Naive thymus-derived CD8-positive, alpha-beta T cell (primary cell): ENCODE measurements at regions of chr1 and their contacts with region 1.

Region 1: GRCh38 chr1:181159451-181160140 is 71.1 kb downstream of the IER5 start:
- DNase-seq: peak in 8 of 10 donors; percentile 40 to 80 (median 65)
- ATAC-seq: peak; percentile 85 to 86
- H3K4me3 Mint-ChIP-seq: peak overlapping the region; percentile 26 to 82 (median 56)
- H3K27ac Mint-ChIP-seq: peak overlapping the region; percentile 57 to 93 (median 86)
- H3K4me1 Mint-ChIP-seq: peaks cover 19 to 45% (median 41%) of the 10 kb centered on the region in 4 donors
- H3K27me3 Mint-ChIP-seq: no peaks in the 10 kb centered on the region

Region 2: DNA sequence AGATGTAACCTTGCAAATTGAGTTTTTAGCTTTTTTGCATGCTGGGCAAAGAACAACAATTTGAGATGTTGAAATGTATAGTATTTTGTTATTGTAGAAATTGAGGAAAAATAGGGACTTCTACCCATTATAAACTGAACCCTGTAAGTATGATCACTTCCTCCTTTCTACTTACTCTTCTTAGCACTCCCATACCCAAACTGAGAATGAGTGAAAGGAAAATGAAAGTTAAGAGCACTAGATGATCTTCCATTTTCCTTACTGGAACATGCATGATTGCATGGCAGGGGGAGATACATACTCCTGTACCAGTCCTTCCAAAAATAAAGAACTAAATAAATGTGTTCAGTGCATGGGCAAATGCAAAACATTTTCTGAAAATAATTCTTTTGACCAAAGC is 354.3 kb before region 1 on chr1:
- POLR2A ChIA-PET with region 1: no interaction called
- DNase-seq: no peak
- ATAC-seq: no peak
- H3K4me3 Mint-ChIP-seq: no peak overlapping the region
- H3K27ac Mint-ChIP-seq: no peak overlapping the region
- H3K4me1 Mint-ChIP-seq: peaks cover 0 to 9% (median 5%) of the 10 kb centered on the region in 4 donors
- H3K27me3 Mint-ChIP-seq: no peaks in the 10 kb centered on the region

Region 3: DNA sequence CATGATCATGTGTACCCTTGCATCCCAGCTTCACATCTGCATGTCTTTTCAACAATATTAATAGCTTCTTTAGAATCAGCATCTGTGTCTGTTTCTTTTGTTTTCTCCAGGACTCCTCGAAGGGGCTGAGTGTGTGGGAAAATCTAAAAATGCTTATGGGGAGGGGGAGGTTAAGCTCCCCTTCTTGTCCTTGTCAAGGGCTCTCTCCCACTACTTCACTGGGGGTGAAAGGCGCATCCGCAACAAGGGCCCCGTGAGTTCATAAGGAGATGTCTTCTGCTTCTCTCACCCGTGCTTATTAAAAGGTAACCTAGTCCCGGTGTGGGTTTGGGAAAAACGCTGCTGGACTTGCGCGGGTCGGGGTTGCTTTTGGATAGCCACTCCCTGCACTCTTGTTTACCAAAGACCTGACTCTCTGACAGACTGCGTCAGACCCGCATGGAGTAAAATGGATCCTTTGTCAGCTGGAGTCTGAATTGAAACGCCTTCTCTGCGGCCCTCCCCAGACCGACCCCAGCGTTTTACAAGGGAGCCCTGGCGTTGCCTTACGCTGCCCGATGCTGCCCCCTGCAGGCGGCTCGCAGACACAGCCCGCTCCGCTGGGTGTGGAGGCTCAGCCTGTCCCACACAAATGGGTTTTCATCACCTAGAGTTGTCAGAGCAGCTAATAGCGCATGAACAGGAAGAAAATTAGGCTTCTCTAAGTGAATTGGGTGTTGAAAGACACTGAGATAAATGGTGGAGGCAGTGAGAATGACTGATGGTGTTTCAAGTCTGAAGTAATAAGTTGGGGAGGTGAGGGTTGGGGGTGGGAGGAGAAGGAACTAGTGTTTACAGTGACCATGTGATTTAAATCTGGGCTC is 17.3 kb before region 1 on chr1:
- POLR2A ChIA-PET with region 1: interaction called, 15 read pairs
- DNase-seq: peak; percentile 73 to 91 (median 86)
- ATAC-seq: peak; percentile 100
- H3K4me3 Mint-ChIP-seq: peak overlapping the region in 3 of 10 donors; percentile 19 to 40 (median 35)
- H3K27ac Mint-ChIP-seq: peak overlapping the region in 4 of 10 donors; percentile 37 to 86 (median 79)
- H3K4me1 Mint-ChIP-seq: peaks cover 17 to 46% (median 32%) of the 10 kb centered on the region in 4 donors
- H3K27me3 Mint-ChIP-seq: peaks cover 0 to 4% (median 0%) of the 10 kb centered on the region in 5 donors

Region 4: GRCh38 chr1:181259026-181259745 is 99.6 kb after region 1 on chr1:
- POLR2A ChIA-PET with region 1: no interaction called
- DNase-seq: no peak
- ATAC-seq: no peak
- H3K4me3 Mint-ChIP-seq: no peak overlapping the region
- H3K27ac Mint-ChIP-seq: no peak overlapping the region
- H3K4me1 Mint-ChIP-seq: peaks cover 0 to 9% (median 0%) of the 10 kb centered on the region in 4 donors
- H3K27me3 Mint-ChIP-seq: peaks cover 4 to 24% (median 18%) of the 10 kb centered on the region in 5 donors